Dorsolateral prefrontal cortex (tissue), 120 donors: ENCODE measurements at regions of chr5 and their contacts with region 1.

Region 1: DNA sequence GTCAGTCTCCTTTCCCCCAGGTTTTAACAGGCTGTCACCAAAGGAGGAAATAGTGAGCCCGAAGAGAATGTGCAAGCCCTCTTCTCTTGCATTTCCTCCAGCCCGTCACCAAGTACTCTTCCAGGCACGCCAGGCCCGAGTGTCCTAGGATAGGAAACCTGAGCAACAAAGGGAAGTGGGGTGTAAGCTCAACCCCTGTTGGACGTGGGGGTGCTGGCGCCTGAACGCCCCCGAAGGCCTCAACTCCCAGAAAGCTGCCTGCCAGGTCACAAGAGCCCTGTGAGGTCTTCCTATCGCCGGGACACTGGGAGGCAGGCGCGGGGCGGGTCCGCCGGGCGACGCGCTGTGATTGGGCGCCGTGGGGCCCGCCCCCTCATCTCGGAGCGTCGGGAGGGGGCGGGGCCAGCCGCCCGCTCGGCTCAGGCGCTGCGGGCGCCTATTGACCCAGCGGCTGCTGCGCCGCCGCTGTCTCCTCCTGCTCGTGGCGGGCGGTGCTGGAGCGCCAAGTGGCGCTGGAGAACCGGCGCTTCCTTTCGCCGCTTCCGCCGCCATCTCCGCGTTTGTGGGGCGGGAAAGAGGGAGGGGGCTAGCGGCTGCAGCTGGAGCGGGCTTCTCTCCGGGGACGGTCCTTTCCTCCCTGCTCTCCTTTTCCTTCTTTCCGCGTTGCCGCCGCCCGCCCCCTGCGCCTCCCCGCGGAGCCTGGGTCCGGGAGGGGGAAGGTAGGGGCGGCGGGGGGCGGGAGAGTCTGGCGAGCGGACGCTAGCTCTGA is 572 bp upstream of the MAN2A1 start:
- DNase-seq: peak; percentile 35 to 90 (median 84)
- H3K4me3 ChIP-seq: peak overlapping the region; percentile 55 to 98 (median 92)
- H3K27ac ChIP-seq: peak overlapping the region; percentile 89 to 99 (median 97)
- H3K27me3 ChIP-seq: no peaks in the 10 kb centered on the region
- CTCF ChIP-seq: peak in 29 of 56 donors; percentile 1 to 51 (median 21)

Region 2: GRCh38 chr5:109485030-109485429 is 204.1 kb before region 1 on chr5:
- intact Hi-C with region 1: loop called in 1 of 2 experiments (anchors 5 kb)
- DNase-seq: peak; percentile 9 to 78 (median 60)
- H3K4me3 ChIP-seq: peak overlapping the region in 29 of 59 donors; percentile 1 to 47 (median 23)
- H3K27ac ChIP-seq: peak overlapping the region in 1 of 59 donors; percentile 54
- H3K27me3 ChIP-seq: no peaks in the 10 kb centered on the region
- CTCF ChIP-seq: peak in 6 of 56 donors; percentile 11 to 21 (median 18)

Region 3: DNA sequence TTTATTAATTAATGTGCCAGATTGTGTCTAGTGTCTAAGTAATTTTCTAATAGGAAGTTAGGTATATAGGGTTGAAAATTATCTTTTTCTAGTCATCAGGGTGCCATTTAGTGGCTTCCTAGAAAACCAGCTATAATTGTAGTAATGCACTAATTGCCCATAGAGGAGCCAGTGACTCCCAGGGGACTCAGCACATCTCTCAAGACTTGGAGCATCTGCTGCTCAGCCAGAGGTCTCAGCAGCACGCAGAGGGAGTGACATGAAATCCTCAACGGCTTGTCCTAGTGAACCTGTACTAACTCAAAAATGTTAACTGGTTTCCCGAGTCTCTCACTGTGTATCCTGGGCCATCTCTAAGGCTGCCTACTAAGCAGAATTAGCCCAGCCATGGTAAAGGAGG is 77.7 kb before region 1 on chr5:
- intact Hi-C with region 1: loop called (anchors 2 to 5 kb)
- DNase-seq: no peak
- H3K4me3 ChIP-seq: no peak overlapping the region
- H3K27ac ChIP-seq: peak overlapping the region; percentile 70 to 100 (median 97)
- H3K27me3 ChIP-seq: no peaks in the 10 kb centered on the region
- CTCF ChIP-seq: no peak

Region 4: GRCh38 chr5:109739741-109740728 is 50.9 kb after region 1 on chr5:
- intact Hi-C with region 1: loop called (anchors 5 to 10 kb)
- DNase-seq: no peak
- H3K4me3 ChIP-seq: peak overlapping the region in 12 of 59 donors; percentile 0 to 28 (median 11)
- H3K27ac ChIP-seq: peak overlapping the region in 55 of 59 donors; percentile 3 to 89 (median 65)
- H3K27me3 ChIP-seq: no peaks in the 10 kb centered on the region
- CTCF ChIP-seq: no peak

Region 5: DNA sequence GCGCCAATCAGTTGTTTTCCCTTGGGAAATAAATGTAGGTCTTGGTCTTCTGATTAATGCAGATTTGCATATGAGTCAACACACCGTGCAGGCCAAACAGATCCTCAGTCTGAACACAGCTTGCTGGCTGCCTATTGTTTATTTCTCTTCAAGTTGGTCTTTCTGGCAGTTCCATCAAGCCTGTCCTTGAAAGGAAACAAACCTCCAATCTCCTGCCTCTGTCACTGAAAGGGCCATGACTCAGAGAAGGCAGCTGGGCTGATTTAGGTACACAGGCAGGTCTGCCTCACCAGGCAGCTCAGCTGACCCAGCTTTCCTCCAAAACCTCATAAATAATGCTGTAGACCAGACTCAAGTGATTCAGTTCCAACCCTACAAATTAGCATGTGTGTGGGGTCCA is 176.5 kb after region 1 on chr5:
- intact Hi-C with region 1: no loop called
- DNase-seq: peak in 4 of 10 donors; percentile 25 to 60 (median 41)
- H3K4me3 ChIP-seq: no peak overlapping the region
- H3K27ac ChIP-seq: peak overlapping the region in 44 of 59 donors; percentile 0 to 70 (median 34)
- H3K27me3 ChIP-seq: no peaks in the 10 kb centered on the region
- CTCF ChIP-seq: no peak

Region 6: GRCh38 chr5:110738812-110739651 is 1049.9 kb after region 1 on chr5 and contains the start of gene SLC25A46:
- intact Hi-C with region 1: loop called in 1 of 2 experiments (anchors 10 kb)
- DNase-seq: peak; percentile 77 to 91 (median 86)
- H3K4me3 ChIP-seq: peak within 1 kb of the TSS; percentile 70 to 100 (median 95)
- H3K27ac ChIP-seq: peak within 1 kb of the TSS; percentile 24 to 94 (median 85)
- H3K27me3 ChIP-seq: no peaks in the 10 kb centered on the region
- CTCF ChIP-seq: peak in 18 of 56 donors; percentile 6 to 47 (median 22)
- total RNA-seq, gene SLC25A46: 35.6 to 89.0 (median 71.8) TPM